Activated B cell treated with CpG ODN at 0.5 μM for 24 hours (primary cell): ENCODE measurements at regions of chr12 and their contacts with region 1.

Region 1: GRCh38 chr12:7995266-7995963 is 37.1 kb upstream of the FOXJ2 start:
- DNase-seq: peak; percentile 50
- ATAC-seq: peak; percentile 99
- H3K4me3 Mint-ChIP-seq: no peak overlapping the region
- H3K27ac Mint-ChIP-seq: no peak overlapping the region
- H3K4me1 Mint-ChIP-seq: peaks cover 3% of the 10 kb centered on the region
- H3K27me3 Mint-ChIP-seq: no peaks in the 10 kb centered on the region
- CTCF ChIP-seq: peak; percentile 53

Region 2: GRCh38 chr12:7581625-7582024 is 413.8 kb before region 1 on chr12:
- CTCF ChIA-PET with region 1: no interaction called
- POLR2A ChIA-PET with region 1: no interaction called
- intact Hi-C with region 1: no loop called
- DNase-seq: no peak
- ATAC-seq: no peak
- H3K4me3 Mint-ChIP-seq: no peak overlapping the region
- H3K27ac Mint-ChIP-seq: no peak overlapping the region
- H3K4me1 Mint-ChIP-seq: peaks cover 3% of the 10 kb centered on the region
- H3K27me3 Mint-ChIP-seq: peaks cover 12% of the 10 kb centered on the region
- CTCF ChIP-seq: no peak

Region 3: DNA sequence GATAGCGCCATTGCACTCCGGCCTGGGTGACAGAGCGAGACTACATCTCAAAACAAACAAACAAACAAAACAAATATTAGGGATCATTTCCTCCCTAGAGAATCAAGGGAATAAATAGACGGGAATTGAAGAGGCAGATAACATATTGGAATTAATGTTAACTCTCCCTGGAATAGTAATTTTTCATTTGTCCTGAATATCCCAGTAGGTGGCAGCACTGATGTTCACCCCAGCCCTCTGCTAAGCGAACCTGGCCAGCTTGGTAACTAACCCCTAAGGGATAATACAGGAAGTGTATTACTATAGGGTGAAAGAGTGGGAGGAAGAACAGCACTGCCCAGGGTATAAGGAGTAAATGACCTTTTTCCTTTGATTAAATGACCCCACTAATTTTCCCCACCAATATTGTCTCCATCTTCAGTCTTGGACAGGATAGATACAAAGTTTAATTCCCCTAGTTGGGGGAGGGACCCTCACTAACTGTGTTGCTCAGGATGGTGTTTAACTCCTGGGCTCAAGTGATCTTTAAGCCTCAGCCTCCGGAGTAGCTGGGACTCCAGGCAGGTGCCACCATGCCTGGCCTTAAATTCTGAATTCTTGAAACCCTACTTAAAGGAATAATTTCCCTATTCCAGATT is 163.2 kb before region 1 on chr12:
- CTCF ChIA-PET with region 1: no interaction called
- POLR2A ChIA-PET with region 1: no interaction called
- intact Hi-C with region 1: loop called (anchors 1 kb)
- DNase-seq: no peak
- ATAC-seq: peak; percentile 75
- H3K4me3 Mint-ChIP-seq: no peak overlapping the region
- H3K27ac Mint-ChIP-seq: no peak overlapping the region
- H3K4me1 Mint-ChIP-seq: peaks cover 2% of the 10 kb centered on the region
- H3K27me3 Mint-ChIP-seq: peaks cover 5% of the 10 kb centered on the region
- CTCF ChIP-seq: no peak

Region 4: DNA sequence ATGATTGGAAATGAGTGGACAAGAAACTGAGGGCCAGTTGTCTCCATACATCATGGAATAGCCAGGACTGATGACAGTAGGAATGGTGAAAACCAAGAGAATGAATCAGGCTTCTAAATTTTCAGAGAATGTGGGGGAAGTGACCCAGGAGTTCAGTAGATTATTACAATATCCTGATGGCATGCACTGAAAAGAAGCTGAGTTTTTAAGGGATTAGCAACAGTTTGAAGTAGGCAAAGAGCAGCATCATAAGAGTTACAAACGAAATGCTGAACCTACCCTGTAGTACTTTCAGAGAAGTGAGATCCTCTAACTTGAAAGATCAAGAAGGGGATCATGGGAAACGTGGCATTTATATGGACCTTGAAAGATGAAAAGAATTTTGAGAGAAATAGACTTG is 135.9 kb before region 1 on chr12:
- CTCF ChIA-PET with region 1: interaction called, 14 read pairs
- POLR2A ChIA-PET with region 1: no interaction called
- intact Hi-C with region 1: loop called (anchors 1 kb)
- DNase-seq: no peak
- ATAC-seq: no peak
- H3K4me3 Mint-ChIP-seq: no peak overlapping the region
- H3K27ac Mint-ChIP-seq: no peak overlapping the region
- H3K4me1 Mint-ChIP-seq: peaks cover 2% of the 10 kb centered on the region
- H3K27me3 Mint-ChIP-seq: peaks cover 8% of the 10 kb centered on the region
- CTCF ChIP-seq: no peak

Region 5: DNA sequence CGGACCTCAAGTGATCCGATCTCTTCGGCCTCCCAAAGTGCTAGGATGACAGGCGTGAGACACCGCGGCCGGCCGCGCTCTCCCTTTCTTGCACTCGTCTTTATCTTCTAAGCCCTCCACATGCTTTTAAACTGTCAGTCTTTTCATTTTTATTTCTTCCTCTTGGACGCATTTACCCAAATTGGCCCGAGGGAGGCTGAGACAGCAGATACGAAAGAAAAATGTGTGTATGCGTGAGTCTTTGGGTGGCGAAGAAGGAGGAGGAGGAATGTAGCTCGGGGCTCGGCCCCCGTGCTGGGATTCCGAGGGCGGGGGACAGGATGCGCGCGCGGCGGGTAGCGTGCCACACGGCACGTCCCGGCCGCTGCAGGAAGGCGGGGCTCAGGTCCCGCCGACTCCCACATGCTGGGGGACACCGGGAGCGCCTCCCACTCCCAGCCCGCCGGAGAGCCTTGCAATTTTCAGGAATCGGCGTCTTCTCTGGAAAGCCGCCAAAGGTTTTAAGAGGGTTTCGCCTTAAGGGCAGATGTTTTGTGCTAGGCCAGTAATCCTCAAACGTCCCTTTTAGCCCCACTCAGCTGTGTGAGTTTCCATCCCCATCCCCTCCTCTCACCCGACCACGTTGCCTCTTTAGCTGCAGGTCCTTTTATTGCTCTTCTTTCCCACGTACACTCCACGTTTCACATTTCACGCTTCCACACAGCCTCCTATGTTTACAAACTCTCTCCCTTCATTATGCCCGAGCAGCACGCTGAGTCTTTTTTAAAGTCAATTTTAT is 24.8 kb before region 1 on chr12:
- CTCF ChIA-PET with region 1: interaction called, 3 read pairs
- POLR2A ChIA-PET with region 1: interaction called, 6 read pairs
- intact Hi-C with region 1: loop called (anchors 2 kb)
- DNase-seq: peak; percentile 73
- ATAC-seq: peak; percentile 93
- H3K4me3 Mint-ChIP-seq: peak overlapping the region; percentile 81
- H3K27ac Mint-ChIP-seq: peak overlapping the region; percentile 90
- H3K4me1 Mint-ChIP-seq: peaks cover 32% of the 10 kb centered on the region
- H3K27me3 Mint-ChIP-seq: no peaks in the 10 kb centered on the region
- CTCF ChIP-seq: no peak

Region 6: DNA sequence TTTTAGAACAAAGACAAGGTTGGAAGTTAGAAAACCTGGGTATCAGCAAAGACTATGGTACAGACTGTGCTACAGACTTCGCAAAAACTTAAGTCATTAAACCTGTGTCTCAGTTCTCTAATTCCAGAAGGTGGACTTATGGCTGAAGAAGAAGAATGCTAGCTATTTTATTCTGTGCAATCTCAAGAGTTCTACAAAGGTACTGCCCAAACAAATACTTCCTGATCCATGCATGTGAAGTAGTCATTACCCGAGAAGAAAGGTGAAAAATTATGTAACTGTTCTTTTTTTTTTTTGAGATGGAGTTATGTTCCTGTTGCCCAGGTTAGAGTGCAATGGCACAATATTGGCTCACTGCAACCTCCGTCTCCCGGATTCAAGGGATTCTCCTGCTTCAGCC is 14.0 kb before region 1 on chr12:
- CTCF ChIA-PET with region 1: no interaction called
- POLR2A ChIA-PET with region 1: interaction called, 3 read pairs
- intact Hi-C with region 1: loop called (anchors 1 kb)
- DNase-seq: no peak
- ATAC-seq: no peak
- H3K4me3 Mint-ChIP-seq: no peak overlapping the region
- H3K27ac Mint-ChIP-seq: no peak overlapping the region
- H3K4me1 Mint-ChIP-seq: peaks cover 20% of the 10 kb centered on the region
- H3K27me3 Mint-ChIP-seq: no peaks in the 10 kb centered on the region
- CTCF ChIP-seq: no peak